CD8-positive, alpha-beta T cell (primary cell): ENCODE measurements at regions of chr17 and their contacts with region 1.

Region 1: DNA sequence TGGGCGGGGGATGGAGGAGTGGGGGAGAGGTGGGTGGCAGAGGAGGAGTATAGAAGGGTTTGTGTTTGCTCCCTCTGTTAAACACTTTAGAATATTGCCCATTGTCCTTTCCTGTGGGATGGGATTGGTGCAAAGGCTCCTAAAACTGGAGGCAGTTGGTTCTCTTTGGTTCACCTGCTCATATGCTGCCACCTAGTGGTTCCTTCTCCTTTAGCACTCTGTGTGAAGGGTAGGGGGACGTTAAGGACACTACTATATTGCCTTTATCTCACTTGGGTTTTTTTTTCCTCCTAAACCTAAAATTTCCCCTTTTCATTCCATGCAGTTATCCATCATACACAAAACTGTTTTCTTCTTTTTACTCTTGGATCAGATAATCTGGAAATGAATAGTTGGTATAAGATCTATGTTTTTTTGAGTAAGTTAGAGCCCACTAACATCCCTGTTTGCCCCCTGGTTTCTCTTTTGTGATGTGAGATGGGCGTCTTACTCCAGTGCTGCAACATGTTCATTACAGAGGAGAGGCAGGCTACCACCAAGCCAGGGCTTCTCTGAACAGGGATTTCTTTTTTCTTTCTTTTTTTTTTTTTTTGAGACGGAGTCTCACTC is 23.8 kb downstream of the SNX11 start:
- DNase-seq: peak in 8 of 9 experiments; percentile 29 to 78 (median 55)
- ATAC-seq: peak; percentile 83
- H3K4me3 ChIP-seq: no peak overlapping the region
- H3K4me3 Mint-ChIP-seq: no peak overlapping the region
- H3K27ac ChIP-seq: no peak overlapping the region
- H3K27ac Mint-ChIP-seq: no peak overlapping the region
- H3K4me1 ChIP-seq: no peaks in the 10 kb centered on the region
- H3K4me1 Mint-ChIP-seq: no peaks in the 10 kb centered on the region
- H3K27me3 ChIP-seq: no peaks in the 10 kb centered on the region
- H3K27me3 Mint-ChIP-seq: no peaks in the 10 kb centered on the region
- CTCF ChIP-seq: peak; percentile 83

Region 2: DNA sequence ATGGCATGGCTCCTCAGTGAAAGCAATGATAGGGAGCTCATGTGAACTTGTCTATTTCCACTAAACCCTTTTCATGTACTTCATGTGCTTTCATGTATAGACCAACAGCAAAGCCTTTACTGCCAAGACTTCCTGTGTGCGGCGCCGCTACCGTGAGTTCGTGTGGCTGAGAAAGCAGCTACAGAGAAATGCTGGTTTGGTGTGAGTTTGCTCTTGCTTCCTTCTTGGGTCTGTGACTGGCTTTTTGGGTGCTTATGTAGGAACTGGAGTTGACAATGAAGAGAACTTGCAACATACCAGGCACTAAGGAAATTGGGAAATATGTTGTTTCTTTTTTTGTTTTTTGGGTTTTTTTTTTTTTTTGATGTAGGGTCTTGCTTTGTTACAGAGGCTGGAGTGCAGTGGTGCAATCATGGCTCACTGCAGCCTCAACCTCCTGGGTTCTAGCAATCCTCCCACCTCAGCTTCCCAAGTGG is 18.1 kb before region 1 on chr17:
- CTCF ChIA-PET with region 1: interaction called, 6 read pairs
- POLR2A ChIA-PET with region 1: interaction called, 3 read pairs
- intact Hi-C with region 1: loop called in 1 of 2 experiments (anchors 2 kb)
- DNase-seq: peak; percentile 6 to 77 (median 54)
- ATAC-seq: peak; percentile 83
- H3K4me3 ChIP-seq: no peak overlapping the region
- H3K4me3 Mint-ChIP-seq: peak overlapping the region; percentile 63
- H3K27ac ChIP-seq: peak overlapping the region in 1 of 2 experiments; percentile 65
- H3K27ac Mint-ChIP-seq: peak overlapping the region; percentile 89
- H3K4me1 ChIP-seq: peaks cover 33% of the 10 kb centered on the region
- H3K4me1 Mint-ChIP-seq: peaks cover 44% of the 10 kb centered on the region
- H3K27me3 ChIP-seq: no peaks in the 10 kb centered on the region
- H3K27me3 Mint-ChIP-seq: no peaks in the 10 kb centered on the region
- CTCF ChIP-seq: no peak

Region 3: GRCh38 chr17:48219617-48220016 is 88.3 kb after region 1 on chr17:
- CTCF ChIA-PET with region 1: no interaction called
- POLR2A ChIA-PET with region 1: no interaction called
- intact Hi-C with region 1: no loop called
- DNase-seq: no peak
- ATAC-seq: no peak
- H3K4me3 ChIP-seq: no peak overlapping the region
- H3K4me3 Mint-ChIP-seq: no peak overlapping the region
- H3K27ac ChIP-seq: no peak overlapping the region
- H3K27ac Mint-ChIP-seq: no peak overlapping the region
- H3K4me1 ChIP-seq: peaks cover 2% of the 10 kb centered on the region
- H3K4me1 Mint-ChIP-seq: peaks cover 26% of the 10 kb centered on the region
- H3K27me3 ChIP-seq: no peaks in the 10 kb centered on the region
- H3K27me3 Mint-ChIP-seq: no peaks in the 10 kb centered on the region
- CTCF ChIP-seq: no peak

Region 4: DNA sequence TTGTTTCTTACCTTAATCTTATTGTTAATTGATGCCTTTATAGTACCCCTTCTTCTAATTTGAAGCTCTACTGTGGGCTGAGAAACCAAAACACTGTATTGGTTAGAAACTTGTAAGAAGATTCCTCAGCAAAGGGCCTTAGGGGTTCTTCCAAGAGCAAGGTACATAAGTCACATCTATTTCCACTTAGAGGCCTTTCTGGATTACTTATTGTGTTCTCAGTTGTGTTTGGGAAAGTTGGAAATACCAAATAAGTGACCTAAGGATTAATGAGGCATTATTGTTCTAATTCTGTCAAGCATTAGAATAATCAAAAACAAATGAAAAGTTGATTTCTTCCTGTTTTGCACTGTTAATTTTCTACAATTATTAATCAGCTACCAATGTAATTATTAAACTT is 212.9 kb after region 1 on chr17:
- CTCF ChIA-PET with region 1: no interaction called
- POLR2A ChIA-PET with region 1: no interaction called
- intact Hi-C with region 1: no loop called
- DNase-seq: no peak
- ATAC-seq: no peak
- H3K4me3 ChIP-seq: no peak overlapping the region
- H3K4me3 Mint-ChIP-seq: no peak overlapping the region
- H3K27ac ChIP-seq: no peak overlapping the region
- H3K27ac Mint-ChIP-seq: no peak overlapping the region
- H3K4me1 ChIP-seq: no peaks in the 10 kb centered on the region
- H3K4me1 Mint-ChIP-seq: peaks cover 14% of the 10 kb centered on the region
- H3K27me3 ChIP-seq: no peaks in the 10 kb centered on the region
- H3K27me3 Mint-ChIP-seq: no peaks in the 10 kb centered on the region
- CTCF ChIP-seq: no peak